Activated B cell treated with CpG ODN at 0.5 μM for 24 hours (primary cell): ENCODE measurements at regions of chr6 and their contacts with region 1.

Region 1: DNA sequence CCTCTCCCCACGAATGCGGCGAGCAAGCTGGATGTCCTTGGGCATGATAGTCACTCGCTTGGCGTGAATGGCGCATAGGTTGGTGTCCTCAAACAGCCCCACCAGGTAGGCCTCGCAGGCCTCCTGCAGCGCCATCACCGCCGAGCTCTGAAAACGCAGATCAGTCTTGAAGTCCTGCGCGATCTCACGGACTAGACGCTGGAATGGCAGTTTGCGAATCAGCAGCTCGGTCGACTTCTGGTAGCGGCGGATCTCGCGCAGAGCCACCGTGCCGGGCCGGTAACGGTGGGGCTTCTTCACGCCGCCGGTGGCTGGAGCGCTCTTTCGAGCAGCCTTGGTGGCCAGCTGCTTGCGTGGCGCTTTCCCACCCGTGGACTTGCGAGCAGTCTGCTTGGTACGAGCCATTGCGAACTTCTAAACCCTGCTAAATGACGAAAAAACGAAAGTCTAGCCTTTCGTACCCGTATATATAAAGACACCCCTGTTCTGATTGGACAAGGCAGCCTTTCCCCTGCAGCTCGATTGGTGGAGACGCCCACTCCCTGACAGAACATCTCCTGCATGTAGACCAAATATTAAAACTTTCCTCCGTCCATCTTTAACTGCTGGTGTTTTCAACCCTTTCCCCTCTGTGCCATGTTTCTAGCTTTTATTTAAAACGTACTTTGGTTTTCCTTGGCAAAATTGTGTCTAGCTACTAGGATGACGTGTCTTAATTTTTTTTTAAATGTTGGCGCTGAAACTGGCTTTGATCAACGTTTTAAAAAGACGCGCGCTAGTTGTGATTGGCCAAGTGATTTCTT is 109.8 kb downstream of the HFE start:
- DNase-seq: peak; percentile 63
- ATAC-seq: peak; percentile 53
- H3K4me3 Mint-ChIP-seq: peak overlapping the region; percentile 93
- H3K27ac Mint-ChIP-seq: peak overlapping the region; percentile 96
- H3K4me1 Mint-ChIP-seq: peaks cover 52% of the 10 kb centered on the region
- H3K27me3 Mint-ChIP-seq: no peaks in the 10 kb centered on the region
- CTCF ChIP-seq: no peak

Region 2: DNA sequence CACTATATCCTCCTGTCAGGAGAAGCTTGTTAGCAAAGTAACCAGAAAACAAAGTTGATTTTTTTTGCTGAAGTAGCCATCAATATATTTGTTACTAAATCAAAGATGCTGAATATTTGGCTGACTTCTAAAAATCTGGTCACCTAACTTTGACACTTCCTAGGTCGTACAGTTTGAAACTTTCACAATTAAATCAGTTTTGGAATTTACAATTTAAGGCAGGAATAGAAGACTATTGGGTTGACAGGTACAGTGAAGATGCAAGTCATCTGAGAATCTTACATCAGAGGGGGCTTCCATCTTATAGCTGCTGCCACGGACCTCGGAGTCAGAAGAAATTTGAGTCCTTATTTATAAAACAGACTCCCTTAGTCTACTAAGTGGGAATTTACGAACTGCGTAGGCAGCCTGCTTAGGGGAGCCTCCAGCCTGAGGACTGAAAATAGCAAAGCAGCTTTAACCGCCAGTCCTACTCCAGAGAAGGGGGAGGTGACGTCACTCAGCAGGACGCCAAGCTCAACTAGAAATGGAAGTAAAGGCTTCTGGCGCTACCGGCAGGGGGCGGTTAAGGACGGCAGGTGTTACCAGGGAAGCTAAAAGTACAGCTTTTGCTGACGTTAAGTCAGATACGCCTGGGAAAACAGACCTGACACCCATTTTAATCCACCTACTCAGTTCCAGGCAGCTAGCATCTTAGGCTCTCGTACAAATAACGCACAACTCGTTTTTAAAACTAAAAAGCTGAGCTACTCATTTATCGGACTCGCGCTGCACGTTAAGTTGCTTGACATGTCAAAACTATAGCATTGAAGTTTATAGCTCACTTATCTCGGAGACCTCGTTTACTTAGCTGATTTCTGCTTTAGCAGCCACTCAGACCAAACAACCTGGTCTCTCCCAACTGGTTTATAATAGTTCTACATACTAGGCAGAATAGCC is 170.9 kb before region 1 on chr6:
- CTCF ChIA-PET with region 1: no interaction called
- POLR2A ChIA-PET with region 1: interaction called, 71 read pairs
- intact Hi-C with region 1: no loop called
- DNase-seq: peak; percentile 76
- ATAC-seq: peak; percentile 39
- H3K4me3 Mint-ChIP-seq: peak overlapping the region; percentile 96
- H3K27ac Mint-ChIP-seq: peak overlapping the region; percentile 99
- H3K4me1 Mint-ChIP-seq: peaks cover 35% of the 10 kb centered on the region
- H3K27me3 Mint-ChIP-seq: peaks cover 2% of the 10 kb centered on the region
- CTCF ChIP-seq: no peak

Region 3: GRCh38 chr6:26087284-26088115 is 109.5 kb before region 1 on chr6 and contains the start of gene HFE:
- CTCF ChIA-PET with region 1: no interaction called
- POLR2A ChIA-PET with region 1: interaction called, 10 read pairs
- intact Hi-C with region 1: no loop called
- DNase-seq: peak; percentile 46
- ATAC-seq: peak; percentile 69
- H3K4me3 Mint-ChIP-seq: peak within 1 kb of the TSS; percentile 89
- H3K27ac Mint-ChIP-seq: peak within 1 kb of the TSS; percentile 82
- H3K4me1 Mint-ChIP-seq: peaks cover 43% of the 10 kb centered on the region
- H3K27me3 Mint-ChIP-seq: no peaks in the 10 kb centered on the region
- CTCF ChIP-seq: no peak
- total RNA-seq, gene HFE: 0.98 and 1.1 TPM in 2 replicates

Region 4: DNA sequence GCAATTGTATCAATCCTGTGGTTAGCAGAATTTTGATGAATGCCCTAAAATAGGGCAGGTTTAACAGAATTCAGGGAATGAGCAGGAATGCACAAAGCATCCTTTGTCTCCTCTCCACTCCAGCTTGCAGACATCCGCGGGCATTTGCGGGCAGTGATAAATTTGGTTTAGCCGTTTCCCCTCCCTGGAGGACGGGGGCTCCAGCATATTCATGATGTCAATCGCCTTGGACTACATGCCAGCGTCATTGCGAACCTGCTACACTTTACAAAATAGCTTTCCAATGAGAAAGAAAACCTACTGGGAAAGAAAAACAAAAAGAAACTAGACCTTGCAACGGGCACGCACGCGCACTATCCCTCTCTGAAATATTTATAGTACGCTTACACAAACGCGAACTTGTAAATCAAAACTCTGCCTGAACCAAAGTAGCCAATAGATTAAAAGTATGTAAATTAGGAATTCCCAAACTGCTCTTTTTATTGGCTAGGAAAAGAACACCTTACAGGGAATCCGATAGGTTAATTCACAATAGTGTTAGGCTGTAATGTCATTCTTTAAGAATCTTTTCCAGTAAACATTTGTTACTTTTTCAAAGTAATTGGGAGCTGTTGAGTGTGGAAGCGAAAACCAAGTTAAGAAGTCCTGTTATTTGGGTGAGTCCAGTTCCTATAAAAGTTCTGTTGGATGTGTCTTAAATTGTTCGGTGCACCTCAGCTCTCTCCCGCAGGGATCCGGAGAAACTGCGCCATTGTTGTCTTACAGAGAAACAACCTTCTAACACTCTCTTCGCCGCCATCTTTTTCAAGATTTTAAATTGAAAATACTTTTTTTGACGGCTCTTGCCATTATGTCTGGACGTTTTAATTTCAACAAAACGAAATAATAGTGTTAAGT is 26.9 kb after region 1 on chr6:
- CTCF ChIA-PET with region 1: no interaction called
- POLR2A ChIA-PET with region 1: interaction called, 63 read pairs
- intact Hi-C with region 1: no loop called
- DNase-seq: no peak
- ATAC-seq: peak; percentile 87
- H3K4me3 Mint-ChIP-seq: no peak overlapping the region
- H3K27ac Mint-ChIP-seq: no peak overlapping the region
- H3K4me1 Mint-ChIP-seq: peaks cover 4% of the 10 kb centered on the region
- H3K27me3 Mint-ChIP-seq: no peaks in the 10 kb centered on the region
- CTCF ChIP-seq: no peak

Region 5: DNA sequence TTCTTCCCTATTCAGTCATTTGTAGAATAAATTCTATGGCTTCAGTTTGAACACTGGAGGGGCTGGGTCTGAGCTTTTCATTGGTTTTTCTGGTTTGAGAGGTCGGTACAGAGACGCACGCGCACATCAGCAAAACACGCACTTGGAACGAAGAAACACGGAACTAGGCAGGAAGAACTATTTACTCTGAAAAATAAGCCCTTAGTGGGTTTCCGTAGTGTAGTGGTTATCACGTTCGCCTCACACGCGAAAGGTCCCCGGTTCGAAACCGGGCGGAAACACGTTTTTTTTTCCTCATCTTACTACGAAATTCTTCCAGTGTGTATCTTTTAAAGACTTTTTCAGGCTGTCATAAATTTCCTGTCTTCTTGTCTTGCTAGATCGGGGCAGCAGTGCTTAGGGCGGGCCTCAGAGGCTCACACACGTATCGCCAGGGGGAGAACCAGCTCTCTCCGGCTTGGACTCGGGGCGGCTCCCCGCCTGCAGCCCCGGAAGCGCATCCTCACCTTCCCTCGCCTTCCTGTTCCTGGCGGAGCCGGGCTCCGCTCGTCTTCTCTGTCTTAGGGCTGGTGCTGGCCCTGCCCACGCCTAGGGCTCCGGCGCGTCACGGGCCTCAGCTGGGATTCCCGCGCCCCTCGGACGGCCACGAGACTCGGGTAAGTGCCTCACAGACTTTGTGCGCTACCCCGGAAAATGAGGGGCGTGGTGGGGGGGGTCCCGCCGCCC is 341.0 kb after region 1 on chr6 and contains the start of gene HMGN4:
- CTCF ChIA-PET with region 1: no interaction called
- POLR2A ChIA-PET with region 1: interaction called, 29 read pairs
- intact Hi-C with region 1: no loop called
- DNase-seq: peak; percentile 73
- ATAC-seq: peak; percentile 67
- H3K4me3 Mint-ChIP-seq: peak within 1 kb of the TSS; percentile 98
- H3K27ac Mint-ChIP-seq: peak within 1 kb of the TSS; percentile 97
- H3K4me1 Mint-ChIP-seq: peaks cover 65% of the 10 kb centered on the region
- H3K27me3 Mint-ChIP-seq: peaks cover 7% of the 10 kb centered on the region
- CTCF ChIP-seq: no peak
- total RNA-seq, gene HMGN4: 74.5 and 82.2 TPM in 2 replicates

Region 6: GRCh38 chr6:27146706-27147505 is 949.9 kb after region 1 on chr6:
- CTCF ChIA-PET with region 1: no interaction called
- POLR2A ChIA-PET with region 1: interaction called, 111 read pairs
- intact Hi-C with region 1: loop called (anchors 1 kb)
- DNase-seq: peak; percentile 70
- ATAC-seq: peak; percentile 80
- H3K4me3 Mint-ChIP-seq: no peak overlapping the region
- H3K27ac Mint-ChIP-seq: no peak overlapping the region
- H3K4me1 Mint-ChIP-seq: peaks cover 26% of the 10 kb centered on the region
- H3K27me3 Mint-ChIP-seq: no peaks in the 10 kb centered on the region
- CTCF ChIP-seq: no peak

Region 7: DNA sequence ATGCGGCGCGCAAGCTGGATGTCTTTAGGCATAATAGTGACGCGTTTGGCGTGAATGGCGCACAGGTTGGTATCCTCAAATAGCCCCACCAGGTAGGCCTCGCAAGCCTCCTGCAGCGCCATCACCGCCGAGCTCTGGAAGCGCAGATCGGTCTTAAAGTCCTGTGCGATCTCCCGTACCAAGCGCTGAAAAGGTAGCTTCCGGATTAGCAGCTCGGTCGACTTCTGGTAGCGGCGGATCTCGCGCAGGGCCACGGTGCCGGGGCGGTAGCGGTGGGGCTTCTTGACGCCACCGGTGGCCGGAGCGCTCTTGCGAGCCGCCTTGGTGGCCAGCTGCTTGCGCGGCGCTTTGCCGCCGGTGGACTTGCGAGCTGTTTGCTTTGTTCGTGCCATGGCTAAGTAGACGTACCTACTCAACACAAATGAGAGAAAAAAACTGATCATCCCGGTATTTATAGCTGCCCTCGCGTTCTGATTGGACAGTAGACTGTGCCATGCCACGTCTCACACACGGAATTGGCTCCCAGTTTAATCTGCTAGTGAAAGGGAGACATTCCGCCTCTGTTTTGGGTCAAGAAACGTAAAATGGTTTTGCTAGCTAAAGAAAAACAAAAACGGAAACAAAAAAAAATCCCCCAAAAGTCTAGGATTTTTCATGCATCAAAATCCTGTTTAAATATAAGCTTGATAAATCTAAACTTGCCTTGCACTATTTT is 1675.0 kb after region 1 on chr6:
- CTCF ChIA-PET with region 1: no interaction called
- POLR2A ChIA-PET with region 1: interaction called, 46 read pairs
- intact Hi-C with region 1: no loop called
- DNase-seq: peak; percentile 73
- ATAC-seq: peak; percentile 80
- H3K4me3 Mint-ChIP-seq: peak overlapping the region; percentile 94
- H3K27ac Mint-ChIP-seq: peak overlapping the region; percentile 95
- H3K4me1 Mint-ChIP-seq: peaks cover 36% of the 10 kb centered on the region
- H3K27me3 Mint-ChIP-seq: no peaks in the 10 kb centered on the region
- CTCF ChIP-seq: no peak